B cell (primary cell): ENCODE measurements at regions of chr3 and their contacts with region 1.

Region 1: GRCh38 chr3:196179380-196180308 is 31.6 kb downstream of the ZDHHC19 start:
- DNase-seq: peak; percentile 85
- ATAC-seq: peak; percentile 86
- H3K4me3 ChIP-seq: peak overlapping the region in 4 of 5 experiments; percentile 18 to 48 (median 32)
- H3K4me3 Mint-ChIP-seq: peak overlapping the region; percentile 74
- H3K27ac ChIP-seq: peak overlapping the region; percentile 78 to 83
- H3K27ac Mint-ChIP-seq: peak overlapping the region; percentile 84
- H3K4me1 ChIP-seq: peaks cover 20 to 33% of the 10 kb centered on the region in 2 donors
- H3K4me1 Mint-ChIP-seq: peaks cover 28% of the 10 kb centered on the region
- H3K27me3 ChIP-seq: no peaks in the 10 kb centered on the region
- H3K27me3 Mint-ChIP-seq: no peaks in the 10 kb centered on the region
- CTCF ChIP-seq: peak; percentile 42

Region 2: DNA sequence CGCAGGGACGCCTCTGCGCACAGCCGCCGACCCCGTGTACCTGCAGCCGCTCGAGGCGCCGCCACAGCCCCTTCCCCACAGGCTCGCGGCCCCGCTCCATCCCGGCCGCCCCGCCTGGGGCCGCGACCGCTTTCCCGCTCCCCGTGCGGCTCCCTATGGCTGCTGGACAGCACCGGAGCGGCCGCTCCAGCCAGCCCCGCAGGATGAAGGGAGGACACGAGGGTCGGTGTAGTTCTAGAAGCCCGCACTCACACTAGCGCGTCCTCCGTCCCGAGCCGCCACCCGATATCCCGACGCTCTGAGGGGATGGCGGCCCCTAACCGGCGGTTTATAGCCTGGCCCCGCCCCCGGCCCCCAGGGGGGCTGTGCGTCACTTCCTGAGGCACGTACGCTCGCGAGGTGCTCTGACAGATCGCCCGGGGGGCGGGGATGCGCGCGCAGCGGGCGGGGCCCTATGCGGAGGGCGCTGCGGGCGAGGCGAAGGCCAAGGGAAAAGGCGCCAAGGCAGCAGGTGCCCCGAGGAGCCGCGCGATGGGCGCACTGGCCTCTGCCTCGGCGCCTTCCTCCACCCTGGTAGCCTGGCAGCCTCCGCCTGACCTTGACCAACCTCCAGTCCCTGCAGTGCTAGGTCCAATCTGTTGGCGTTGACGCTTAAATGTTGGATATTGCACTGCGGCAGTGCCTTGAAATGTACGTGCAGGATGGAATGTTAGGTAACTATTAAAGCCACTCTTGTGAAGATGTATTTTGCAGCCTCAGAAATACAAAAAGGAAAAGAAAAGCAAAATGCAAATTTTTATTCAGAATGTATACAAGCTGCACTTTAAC is 97.6 kb before region 1 on chr3 and contains the start of gene TFRC:
- CTCF ChIA-PET with region 1: no interaction called
- POLR2A ChIA-PET with region 1: interaction called, 6 read pairs
- intact Hi-C with region 1: loop called (anchors 1 kb)
- DNase-seq: peak; percentile 97
- ATAC-seq: peak; percentile 93
- H3K4me3 ChIP-seq: peak within 1 kb of the TSS; percentile 79 to 99 (median 86)
- H3K4me3 Mint-ChIP-seq: peak within 1 kb of the TSS; percentile 93
- H3K27ac ChIP-seq: peak within 1 kb of the TSS; percentile 84 to 97
- H3K27ac Mint-ChIP-seq: peak within 1 kb of the TSS; percentile 96
- H3K4me1 ChIP-seq: peaks cover 25 to 42% of the 10 kb centered on the region in 2 donors
- H3K4me1 Mint-ChIP-seq: peaks cover 44% of the 10 kb centered on the region
- H3K27me3 ChIP-seq: no peaks in the 10 kb centered on the region
- H3K27me3 Mint-ChIP-seq: no peaks in the 10 kb centered on the region
- CTCF ChIP-seq: no peak
- total RNA-seq, gene TFRC: 104 and 117 TPM in 2 replicates

Region 3: GRCh38 chr3:196115678-196116083 is 64.0 kb before region 1 on chr3:
- CTCF ChIA-PET with region 1: interaction called, 4 read pairs
- POLR2A ChIA-PET with region 1: interaction called, 6 read pairs
- intact Hi-C with region 1: loop called (anchors 5 kb)
- DNase-seq: peak; percentile 80
- ATAC-seq: peak; percentile 66
- H3K4me3 ChIP-seq: peak overlapping the region in 2 of 5 experiments; percentile 2 to 24
- H3K4me3 Mint-ChIP-seq: no peak overlapping the region
- H3K27ac ChIP-seq: peak overlapping the region; percentile 79 to 90
- H3K27ac Mint-ChIP-seq: no peak overlapping the region
- H3K4me1 ChIP-seq: peaks cover 67 to 74% of the 10 kb centered on the region in 2 donors
- H3K4me1 Mint-ChIP-seq: peaks cover 49% of the 10 kb centered on the region
- H3K27me3 ChIP-seq: no peaks in the 10 kb centered on the region
- H3K27me3 Mint-ChIP-seq: no peaks in the 10 kb centered on the region
- CTCF ChIP-seq: no peak

Region 4: GRCh38 chr3:196159952-196160804 is 19.5 kb before region 1 on chr3:
- CTCF ChIA-PET with region 1: interaction called, 11 read pairs
- POLR2A ChIA-PET with region 1: no interaction called
- intact Hi-C with region 1: no loop called
- DNase-seq: peak; percentile 90
- ATAC-seq: peak; percentile 99
- H3K4me3 ChIP-seq: no peak overlapping the region
- H3K4me3 Mint-ChIP-seq: peak overlapping the region; percentile 73
- H3K27ac ChIP-seq: peak overlapping the region; percentile 59 to 75
- H3K27ac Mint-ChIP-seq: peak overlapping the region; percentile 94
- H3K4me1 ChIP-seq: peaks cover 13 to 15% of the 10 kb centered on the region in 2 donors
- H3K4me1 Mint-ChIP-seq: peaks cover 21% of the 10 kb centered on the region
- H3K27me3 ChIP-seq: no peaks in the 10 kb centered on the region
- H3K27me3 Mint-ChIP-seq: no peaks in the 10 kb centered on the region
- CTCF ChIP-seq: no peak

Region 5: DNA sequence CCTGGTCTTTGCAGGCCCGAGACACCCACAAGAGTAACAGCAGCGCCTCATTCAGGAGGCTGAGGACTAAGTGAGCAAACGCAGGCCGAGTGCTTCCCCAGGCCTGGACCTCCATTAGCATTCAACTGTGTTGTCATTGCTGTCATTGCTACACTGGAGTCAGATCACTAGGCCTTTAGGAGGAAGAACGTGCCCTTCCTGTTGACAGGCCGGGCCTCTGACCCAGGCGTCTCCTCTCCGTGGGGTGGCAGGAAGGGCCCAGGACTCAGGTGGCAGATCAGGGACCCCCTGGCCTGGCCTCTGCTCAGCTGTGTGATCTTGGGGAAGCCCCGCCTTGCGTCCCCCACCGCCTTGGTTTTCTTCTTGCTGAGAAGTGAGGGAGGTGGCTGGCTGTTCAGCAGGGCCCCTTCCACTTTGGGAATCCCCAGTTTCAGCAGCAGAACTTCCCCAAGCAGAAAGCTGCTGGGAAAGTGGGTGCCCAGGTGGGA is 12.4 kb after region 1 on chr3:
- CTCF ChIA-PET with region 1: interaction called, 7 read pairs
- POLR2A ChIA-PET with region 1: interaction called, 11 read pairs
- intact Hi-C with region 1: loop called (anchors 1 kb)
- DNase-seq: peak; percentile 92
- ATAC-seq: peak; percentile 65
- H3K4me3 ChIP-seq: no peak overlapping the region
- H3K4me3 Mint-ChIP-seq: peak overlapping the region; percentile 80
- H3K27ac ChIP-seq: peak overlapping the region; percentile 91 to 94
- H3K27ac Mint-ChIP-seq: peak overlapping the region; percentile 98
- H3K4me1 ChIP-seq: peaks cover 39 to 68% of the 10 kb centered on the region in 2 donors
- H3K4me1 Mint-ChIP-seq: peaks cover 40% of the 10 kb centered on the region
- H3K27me3 ChIP-seq: no peaks in the 10 kb centered on the region
- H3K27me3 Mint-ChIP-seq: no peaks in the 10 kb centered on the region
- CTCF ChIP-seq: no peak

Region 6: DNA sequence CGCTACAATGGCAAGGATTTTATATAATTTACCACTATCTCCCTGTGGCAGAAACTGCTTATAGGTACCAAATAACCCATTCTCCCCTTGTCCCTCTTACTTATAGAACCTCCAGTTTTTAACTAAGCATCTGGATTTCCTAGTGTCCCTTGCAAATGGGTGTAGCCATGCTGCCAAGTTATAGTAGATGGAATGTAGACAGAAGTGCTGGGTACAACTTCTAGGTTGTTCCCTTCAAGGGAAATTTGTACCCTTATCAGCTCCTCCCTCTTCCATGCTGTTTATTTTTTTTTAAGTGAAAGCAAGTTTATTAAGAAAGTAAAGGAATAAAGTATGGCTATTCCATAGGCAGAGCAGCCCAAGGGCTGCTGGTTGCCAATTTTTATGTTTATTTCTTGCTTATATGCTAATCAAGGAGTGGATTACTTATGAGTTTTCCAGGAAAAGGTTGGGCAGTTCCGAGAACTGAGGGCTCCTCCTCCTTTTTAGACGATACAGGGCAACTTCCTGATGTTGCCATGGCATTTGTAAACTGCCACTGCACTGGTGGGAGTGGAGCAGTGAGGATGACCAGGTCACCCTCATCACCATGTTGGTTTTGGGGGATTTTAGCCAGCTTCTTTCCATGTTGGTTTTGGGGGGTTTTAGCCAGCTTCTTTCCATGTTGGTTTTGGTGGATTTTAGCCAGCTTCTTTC is 198.7 kb after region 1 on chr3:
- CTCF ChIA-PET with region 1: no interaction called
- POLR2A ChIA-PET with region 1: no interaction called
- intact Hi-C with region 1: no loop called
- DNase-seq: no peak
- ATAC-seq: no peak
- H3K4me3 ChIP-seq: no peak overlapping the region
- H3K4me3 Mint-ChIP-seq: no peak overlapping the region
- H3K27ac ChIP-seq: no peak overlapping the region
- H3K27ac Mint-ChIP-seq: no peak overlapping the region
- H3K4me1 ChIP-seq: no peaks in the 10 kb centered on the region
- H3K4me1 Mint-ChIP-seq: peaks cover 3% of the 10 kb centered on the region
- H3K27me3 ChIP-seq: no peaks in the 10 kb centered on the region
- H3K27me3 Mint-ChIP-seq: no peaks in the 10 kb centered on the region
- CTCF ChIP-seq: no peak

Region 7: GRCh38 chr3:196632046-196632751 is 452.6 kb after region 1 on chr3:
- CTCF ChIA-PET with region 1: no interaction called
- POLR2A ChIA-PET with region 1: no interaction called
- intact Hi-C with region 1: no loop called
- DNase-seq: peak; percentile 90
- ATAC-seq: peak; percentile 82
- H3K4me3 ChIP-seq: peak overlapping the region; percentile 60 to 78 (median 70)
- H3K4me3 Mint-ChIP-seq: peak overlapping the region; percentile 92
- H3K27ac ChIP-seq: peak overlapping the region; percentile 94 to 97
- H3K27ac Mint-ChIP-seq: peak overlapping the region; percentile 96
- H3K4me1 ChIP-seq: peaks cover 29 to 49% of the 10 kb centered on the region in 2 donors
- H3K4me1 Mint-ChIP-seq: peaks cover 52% of the 10 kb centered on the region
- H3K27me3 ChIP-seq: no peaks in the 10 kb centered on the region
- H3K27me3 Mint-ChIP-seq: no peaks in the 10 kb centered on the region
- CTCF ChIP-seq: peak; percentile 29